Activated naive CD4-positive, alpha-beta T cell treated with anti-CD3 and anti-CD28 coated beads, Interleukin-2, amount 10 ng/mL, durations not matched to agents 7 days and 5 days (primary cell): ENCODE measurements at regions of chr15 and their contacts with region 1.

Region 1: GRCh38 chr15:73691396-73691795 is 7.2 kb downstream of the CD276 start:
- DNase-seq: no peak
- H3K4me3 Mint-ChIP-seq: no peak overlapping the region
- H3K27ac Mint-ChIP-seq: no peak overlapping the region
- H3K4me1 Mint-ChIP-seq: peaks cover 5% of the 10 kb centered on the region
- H3K27me3 Mint-ChIP-seq: peaks cover 67% of the 10 kb centered on the region

Region 2: GRCh38 chr15:73677146-73677607 is 14.2 kb before region 1 on chr15:
- CTCF ChIA-PET with region 1: interaction called, 24 read pairs
- DNase-seq: peak; percentile 68
- H3K4me3 Mint-ChIP-seq: no peak overlapping the region
- H3K27ac Mint-ChIP-seq: no peak overlapping the region
- H3K4me1 Mint-ChIP-seq: peaks cover 2% of the 10 kb centered on the region
- H3K27me3 Mint-ChIP-seq: peaks cover 39% of the 10 kb centered on the region

Region 3: DNA sequence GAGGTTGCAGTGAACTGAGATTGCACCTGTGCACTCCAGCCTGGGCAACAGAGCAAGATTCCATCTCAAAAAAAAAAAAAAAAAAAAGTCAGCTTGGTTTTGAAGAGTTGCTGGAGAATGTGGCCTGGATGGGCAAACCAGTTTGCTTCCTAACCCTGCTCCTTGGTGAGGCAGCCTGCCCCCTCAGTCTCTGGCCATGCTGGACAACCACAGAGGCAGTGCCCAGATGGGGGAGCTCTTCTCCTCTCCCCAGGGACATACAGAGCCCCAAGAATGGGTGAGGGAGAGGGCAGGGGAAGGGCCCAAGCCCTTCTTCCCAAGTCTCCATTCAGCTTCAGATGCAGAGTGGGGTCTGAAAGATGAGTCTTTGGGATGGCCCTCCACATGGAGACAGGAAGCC is 20.7 kb after region 1 on chr15:
- CTCF ChIA-PET with region 1: no interaction called
- DNase-seq: no peak
- H3K4me3 Mint-ChIP-seq: no peak overlapping the region
- H3K27ac Mint-ChIP-seq: no peak overlapping the region
- H3K4me1 Mint-ChIP-seq: no peaks in the 10 kb centered on the region
- H3K27me3 Mint-ChIP-seq: peaks cover 22% of the 10 kb centered on the region